ENCODE measurements at regions of chr20 and their contacts with region 1.

Region 1: GRCh38 chr20:8043687-8044282 is 24.2 kb upstream of the TMX4 start:
- DNase-seq: no peak
- H3K4me3 ChIP-seq: no peak overlapping the region
- CTCF ChIP-seq: peak; percentile 29

Region 2: DNA sequence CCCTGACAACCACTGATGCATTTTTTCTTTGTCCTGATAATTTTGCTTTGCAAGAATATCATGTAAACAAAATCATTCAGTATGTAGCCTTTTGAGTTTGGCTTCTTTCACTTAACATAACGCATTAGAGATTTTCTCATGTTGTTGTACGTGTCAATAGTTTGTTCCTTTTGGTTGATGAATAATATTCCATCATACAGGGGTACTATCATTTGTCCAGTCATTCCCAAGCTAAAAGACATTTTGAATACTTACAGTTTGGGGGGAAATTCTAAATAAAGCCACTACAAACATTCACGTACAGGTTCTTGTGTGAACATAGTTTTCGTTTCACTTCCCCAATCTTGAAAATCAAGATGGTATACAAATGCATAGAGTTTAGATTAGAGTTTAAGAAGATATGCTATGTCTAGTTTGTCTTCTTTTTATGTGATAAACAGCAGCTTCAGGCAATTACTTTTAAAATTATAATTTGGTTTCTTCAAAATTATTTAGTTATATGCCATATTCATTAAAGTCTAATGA is 108.7 kb before region 1 on chr20:
- CTCF ChIA-PET with region 1: interaction called, 19 read pairs
- POLR2A ChIA-PET with region 1: no interaction called
- DNase-seq: no peak
- H3K4me3 ChIP-seq: no peak overlapping the region
- CTCF ChIP-seq: no peak

Region 3: GRCh38 chr20:8057871-8058270 is 14.1 kb after region 1 on chr20:
- CTCF ChIA-PET with region 1: interaction called, 21 read pairs
- POLR2A ChIA-PET with region 1: no interaction called
- DNase-seq: no peak
- H3K4me3 ChIP-seq: no peak overlapping the region
- CTCF ChIP-seq: no peak

Region 4: GRCh38 chr20:8121666-8122065 is 77.9 kb after region 1 on chr20:
- CTCF ChIA-PET with region 1: interaction called, 20 read pairs
- POLR2A ChIA-PET with region 1: no interaction called
- DNase-seq: no peak
- H3K4me3 ChIP-seq: no peak overlapping the region
- CTCF ChIP-seq: no peak

Region 5: DNA sequence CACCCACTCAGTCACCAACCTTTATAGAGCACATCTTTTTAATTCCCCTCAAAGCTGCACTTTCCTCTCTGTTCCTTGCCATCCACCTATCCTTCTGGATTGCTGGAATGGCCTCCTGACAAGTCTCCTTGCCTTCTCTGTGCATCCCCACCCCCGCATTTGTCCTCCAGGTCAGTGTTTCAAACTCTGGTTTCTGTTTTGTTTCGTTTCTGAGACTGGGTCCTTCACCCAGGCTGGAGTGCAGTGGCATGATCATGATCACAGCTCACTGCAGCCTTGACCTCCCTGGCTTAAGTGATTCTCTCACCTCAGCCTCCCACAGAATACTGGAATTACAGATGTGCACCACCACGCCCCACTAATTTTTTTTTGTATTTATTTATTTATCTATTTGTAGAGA is 184.5 kb after region 1 on chr20:
- CTCF ChIA-PET with region 1: no interaction called
- POLR2A ChIA-PET with region 1: no interaction called
- DNase-seq: no peak
- H3K4me3 ChIP-seq: no peak overlapping the region
- CTCF ChIP-seq: no peak

Region 6: GRCh38 chr20:8389381-8390036 is 345.7 kb after region 1 on chr20:
- CTCF ChIA-PET with region 1: interaction called, 40 read pairs
- POLR2A ChIA-PET with region 1: no interaction called
- DNase-seq: no peak
- H3K4me3 ChIP-seq: no peak overlapping the region
- CTCF ChIP-seq: no peak